A673 (cell line): ENCODE measurements at regions of chr10 and their contacts with region 1.

Region 1: DNA sequence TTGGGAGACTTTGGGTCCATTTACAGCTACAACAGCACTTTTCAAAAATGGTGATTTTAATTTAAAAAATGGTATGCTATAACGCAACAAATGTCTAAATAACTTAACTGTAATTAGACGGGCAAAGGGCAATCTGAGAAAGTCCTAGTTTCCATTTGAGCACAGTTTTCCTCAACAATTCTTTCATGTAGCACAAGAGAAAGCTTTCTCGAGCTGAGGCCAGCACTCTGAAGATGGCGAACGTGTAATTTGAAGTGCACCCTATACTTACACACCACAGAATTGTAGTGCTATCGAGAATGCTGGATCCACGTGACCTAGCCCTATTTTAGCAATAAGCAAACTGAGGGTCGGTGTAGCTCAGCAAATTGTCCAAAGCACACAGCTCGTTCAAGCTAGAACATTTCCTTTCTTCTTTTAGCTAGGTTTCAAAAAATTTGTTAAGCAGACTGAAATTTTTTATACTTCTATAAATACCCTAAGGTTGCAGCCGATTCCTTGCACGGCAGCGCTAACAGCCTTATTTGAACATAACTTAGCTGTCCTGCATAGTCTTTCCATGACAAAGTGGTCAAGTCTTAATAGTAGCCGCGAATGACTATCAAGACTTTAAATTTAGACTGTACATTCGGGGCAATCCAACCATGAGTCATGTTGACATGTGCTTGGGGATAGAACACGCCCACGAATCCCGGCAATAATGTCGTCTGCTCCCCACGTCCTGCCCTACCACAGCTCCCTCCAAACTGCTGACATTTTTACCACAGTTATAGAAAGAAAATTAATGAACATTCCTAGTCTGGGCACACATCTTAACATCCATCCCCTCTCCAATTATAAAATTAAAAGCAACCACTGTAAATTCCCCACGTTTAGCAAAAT is 10.0 kb downstream of the KLF6 start:
- DNase-seq: peak; percentile 48
- H3K4me3 ChIP-seq: no peak overlapping the region
- H3K27ac ChIP-seq: no peak overlapping the region
- H3K4me1 ChIP-seq: peaks cover 34% of the 10 kb centered on the region
- H3K27me3 ChIP-seq: no peaks in the 10 kb centered on the region
- CTCF ChIP-seq: no peak

Region 2: DNA sequence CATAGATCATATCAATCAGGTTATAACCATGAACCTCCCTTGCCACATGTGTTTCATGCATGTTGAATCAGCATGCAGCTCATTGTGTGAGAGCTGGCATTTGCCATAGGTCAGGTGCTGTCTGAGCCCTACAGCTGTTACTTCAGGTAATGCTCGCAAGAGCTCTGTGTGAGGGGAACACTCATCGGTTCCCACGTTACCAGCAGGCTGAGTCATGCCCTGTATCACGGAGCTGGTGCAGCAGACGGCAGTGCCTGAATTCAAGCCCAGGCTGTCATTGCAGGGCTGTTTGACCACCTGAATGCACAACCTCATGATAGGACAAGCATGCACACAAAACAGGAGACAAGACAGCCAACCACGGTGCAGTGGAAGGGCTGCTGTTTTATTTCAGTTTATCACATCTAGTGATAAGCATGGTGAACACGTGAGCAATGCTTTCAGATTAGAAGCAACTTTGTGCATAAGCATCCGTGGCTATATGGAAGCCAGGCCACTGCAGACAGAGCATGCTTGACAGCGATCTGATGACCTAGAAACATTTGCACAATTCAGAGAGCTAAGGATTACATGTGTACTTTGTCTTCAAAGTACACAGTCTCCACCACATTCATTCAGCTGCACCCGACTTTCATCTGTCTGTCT is 764.1 kb before region 1 on chr10:
- CTCF ChIA-PET with region 1: no interaction called
- POLR2A ChIA-PET with region 1: interaction called, 13 read pairs
- intact Hi-C with region 1: no loop called
- DNase-seq: no peak
- H3K4me3 ChIP-seq: no peak overlapping the region
- H3K27ac ChIP-seq: no peak overlapping the region
- H3K4me1 ChIP-seq: no peaks in the 10 kb centered on the region
- H3K27me3 ChIP-seq: peaks cover 73% of the 10 kb centered on the region
- CTCF ChIP-seq: no peak

Region 3: GRCh38 chr10:3623746-3624145 is 151.3 kb before region 1 on chr10:
- CTCF ChIA-PET with region 1: no interaction called
- POLR2A ChIA-PET with region 1: no interaction called
- intact Hi-C with region 1: no loop called
- DNase-seq: no peak
- H3K4me3 ChIP-seq: no peak overlapping the region
- H3K27ac ChIP-seq: no peak overlapping the region
- H3K4me1 ChIP-seq: peaks cover 22% of the 10 kb centered on the region
- H3K27me3 ChIP-seq: no peaks in the 10 kb centered on the region
- CTCF ChIP-seq: no peak

Region 4: DNA sequence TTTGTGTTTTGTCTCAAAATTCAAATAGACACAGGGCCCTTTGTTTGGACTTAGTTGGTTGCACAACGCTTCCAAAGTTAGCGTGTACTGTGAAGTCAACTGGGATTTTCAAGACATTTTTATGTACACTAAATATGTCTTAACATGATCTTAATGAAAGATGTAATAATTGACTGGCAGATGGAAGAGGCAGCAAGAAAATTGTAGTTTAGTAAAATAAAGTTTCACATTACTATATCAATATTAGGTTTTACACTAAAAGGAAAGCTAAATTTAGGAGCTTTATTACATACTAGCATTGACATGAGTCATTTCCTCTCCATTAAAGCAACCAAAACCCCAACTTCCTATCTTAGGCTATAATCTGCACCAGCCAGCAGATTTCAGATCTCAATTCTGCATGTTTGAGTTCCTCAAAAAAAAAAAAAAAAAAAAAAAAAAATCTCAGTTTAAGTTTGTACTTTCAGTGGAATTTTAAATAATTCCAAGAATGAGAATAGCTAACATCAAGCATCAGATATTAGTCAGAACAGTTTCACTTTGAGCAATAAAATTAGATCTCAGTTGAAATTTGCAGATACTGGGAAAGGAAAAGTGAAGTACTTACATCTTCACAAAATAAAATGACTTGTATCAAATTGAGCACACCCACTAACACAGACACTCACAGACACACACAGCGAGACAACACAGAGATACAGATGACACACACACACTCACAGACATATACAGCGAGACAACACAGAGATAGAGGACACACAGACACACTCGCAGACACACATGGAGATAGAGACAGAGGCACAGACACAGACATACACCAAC is 356.6 kb after region 1 on chr10:
- CTCF ChIA-PET with region 1: no interaction called
- POLR2A ChIA-PET with region 1: no interaction called
- intact Hi-C with region 1: no loop called
- DNase-seq: peak; percentile 94
- H3K4me3 ChIP-seq: peak overlapping the region; percentile 10
- H3K27ac ChIP-seq: peak overlapping the region; percentile 84
- H3K4me1 ChIP-seq: peaks cover 27% of the 10 kb centered on the region
- H3K27me3 ChIP-seq: no peaks in the 10 kb centered on the region
- CTCF ChIP-seq: no peak